ENCODE measurements at regions of chr3 and their contacts with region 1.

Region 1: DNA sequence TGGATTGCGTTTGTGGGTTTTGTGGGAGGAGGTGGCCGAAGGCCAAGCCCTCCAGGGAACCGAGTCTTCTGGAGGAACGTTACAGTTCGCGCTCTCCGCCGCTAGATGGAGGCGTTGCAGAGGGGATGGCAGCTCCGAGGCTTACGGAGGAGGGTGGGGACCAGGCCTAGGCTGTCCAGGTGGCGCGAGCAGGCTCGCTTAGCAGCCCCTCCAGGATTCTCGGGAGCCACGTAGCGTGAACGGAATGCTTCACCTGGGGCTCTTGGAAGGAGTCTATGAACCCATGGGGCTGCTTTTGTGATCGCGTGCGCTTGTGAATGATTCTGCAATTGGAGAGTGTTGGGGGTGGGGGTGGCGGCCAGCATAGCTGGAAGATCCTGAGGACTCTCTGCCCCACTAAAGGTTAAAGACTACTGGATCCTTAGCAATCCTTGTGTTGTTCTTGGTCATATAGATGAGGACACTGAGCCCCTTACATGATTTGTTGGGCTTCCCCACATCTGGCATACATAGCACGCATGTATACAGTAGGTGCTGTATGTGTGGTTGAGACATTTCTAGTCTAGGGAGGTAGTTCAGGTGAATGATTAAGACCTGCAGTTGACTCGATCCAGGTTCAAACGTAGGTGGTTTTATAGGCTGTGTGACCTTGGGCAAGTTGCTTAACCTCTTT is 25.7 kb downstream of the FAM3D start:
- DNase-seq: no peak
- H3K4me3 ChIP-seq: no peak overlapping the region
- CTCF ChIP-seq: peak; percentile 96

Region 2: GRCh38 chr3:58585005-58585786 is 55.6 kb before region 1 on chr3:
- CTCF ChIA-PET with region 1: interaction called, 646 read pairs
- POLR2A ChIA-PET with region 1: no interaction called
- DNase-seq: no peak
- H3K4me3 ChIP-seq: peak overlapping the region; percentile 62
- CTCF ChIP-seq: peak; percentile 86

Region 3: GRCh38 chr3:58659051-58659675 is 18.3 kb after region 1 on chr3:
- CTCF ChIA-PET with region 1: interaction called, 63 read pairs
- POLR2A ChIA-PET with region 1: no interaction called
- DNase-seq: no peak
- H3K4me3 ChIP-seq: no peak overlapping the region
- CTCF ChIP-seq: peak; percentile 41

Region 4: GRCh38 chr3:58731673-58732072 is 90.8 kb after region 1 on chr3:
- CTCF ChIA-PET with region 1: no interaction called
- POLR2A ChIA-PET with region 1: no interaction called
- DNase-seq: no peak
- H3K4me3 ChIP-seq: no peak overlapping the region
- CTCF ChIP-seq: no peak

Region 5: GRCh38 chr3:58973796-58974195 is 333.0 kb after region 1 on chr3:
- CTCF ChIA-PET with region 1: no interaction called
- POLR2A ChIA-PET with region 1: no interaction called
- DNase-seq: no peak
- H3K4me3 ChIP-seq: no peak overlapping the region
- CTCF ChIP-seq: no peak

Measured in AG04449 (cell line).